Right ventricle myocardium superior (tissue), 1 donor: ENCODE measurements at regions of chr4 and their contacts with region 1.

Region 1: GRCh38 chr4:129641179-129641578 is 545.2 kb downstream of the C4orf33 start:
- DNase-seq: peak; percentile 36
- ATAC-seq: no peak

Region 2: DNA sequence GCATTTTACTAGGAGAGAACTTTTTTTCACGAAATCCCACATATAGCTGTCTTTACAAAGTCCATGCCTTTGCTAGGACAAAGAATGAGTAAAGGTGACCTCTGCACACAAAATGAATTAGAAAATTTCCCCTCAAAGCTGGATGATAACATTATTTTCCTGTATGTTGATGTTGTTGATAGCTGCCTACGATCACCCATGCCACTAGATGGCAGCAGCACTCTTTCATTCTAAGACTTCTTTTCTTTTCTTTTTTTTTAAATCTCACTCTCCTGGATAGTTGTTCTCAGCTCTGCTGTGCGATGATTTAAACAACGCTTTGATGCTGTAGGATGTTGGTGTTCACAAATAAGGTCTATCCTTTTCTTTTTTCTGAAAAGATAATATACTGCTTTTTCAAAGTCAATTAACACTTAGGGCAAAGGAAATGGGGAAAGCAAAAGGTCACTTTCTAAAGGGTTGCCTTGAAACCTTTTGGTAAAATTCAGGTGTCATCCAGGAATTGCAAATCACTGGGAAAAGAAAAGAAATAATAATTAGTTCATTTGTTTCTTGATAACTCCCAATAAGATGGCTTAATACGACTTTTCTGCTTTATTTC is 278.4 kb before region 1 on chr4:
- intact Hi-C with region 1: loop called (anchors 5 kb)
- DNase-seq: peak; percentile 44
- ATAC-seq: peak; percentile 82